Calu3 (cell line): ENCODE measurements at regions of chr16 and their contacts with region 1.

Region 1: GRCh38 chr16:12758031-12758701 is 45.5 kb downstream of the CPPED1 start:
- DNase-seq: no peak
- H3K4me3 Mint-ChIP-seq: no peak overlapping the region
- H3K27ac Mint-ChIP-seq: no peak overlapping the region
- H3K4me1 Mint-ChIP-seq: no peaks in the 10 kb centered on the region
- H3K27me3 Mint-ChIP-seq: peaks cover 36% of the 10 kb centered on the region
- CTCF ChIP-seq: no peak

Region 2: DNA sequence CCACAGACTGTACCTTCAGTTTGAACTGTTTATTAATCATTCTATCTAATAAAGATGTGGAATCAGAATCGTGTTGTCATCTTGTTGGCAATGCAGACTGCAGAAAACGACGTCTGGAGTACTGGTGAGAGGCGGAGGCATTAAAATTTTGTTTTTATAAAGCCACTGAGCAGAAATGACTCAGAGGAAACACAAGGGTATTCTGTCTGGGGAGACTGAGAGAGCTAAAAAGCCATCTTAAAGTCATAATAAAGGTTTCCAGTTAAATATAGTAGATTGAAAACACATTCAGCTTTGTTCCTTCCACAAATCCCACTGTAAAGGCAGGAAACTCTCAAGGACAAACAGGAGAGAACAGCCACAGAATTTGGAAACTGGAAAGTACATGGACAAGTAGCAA is 28.7 kb before region 1 on chr16:
- CTCF ChIA-PET with region 1: interaction called, 12 read pairs
- intact Hi-C with region 1: no loop called
- DNase-seq: no peak
- H3K4me3 Mint-ChIP-seq: no peak overlapping the region
- H3K27ac Mint-ChIP-seq: no peak overlapping the region
- H3K4me1 Mint-ChIP-seq: no peaks in the 10 kb centered on the region
- H3K27me3 Mint-ChIP-seq: peaks cover 6% of the 10 kb centered on the region
- CTCF ChIP-seq: no peak

Region 3: DNA sequence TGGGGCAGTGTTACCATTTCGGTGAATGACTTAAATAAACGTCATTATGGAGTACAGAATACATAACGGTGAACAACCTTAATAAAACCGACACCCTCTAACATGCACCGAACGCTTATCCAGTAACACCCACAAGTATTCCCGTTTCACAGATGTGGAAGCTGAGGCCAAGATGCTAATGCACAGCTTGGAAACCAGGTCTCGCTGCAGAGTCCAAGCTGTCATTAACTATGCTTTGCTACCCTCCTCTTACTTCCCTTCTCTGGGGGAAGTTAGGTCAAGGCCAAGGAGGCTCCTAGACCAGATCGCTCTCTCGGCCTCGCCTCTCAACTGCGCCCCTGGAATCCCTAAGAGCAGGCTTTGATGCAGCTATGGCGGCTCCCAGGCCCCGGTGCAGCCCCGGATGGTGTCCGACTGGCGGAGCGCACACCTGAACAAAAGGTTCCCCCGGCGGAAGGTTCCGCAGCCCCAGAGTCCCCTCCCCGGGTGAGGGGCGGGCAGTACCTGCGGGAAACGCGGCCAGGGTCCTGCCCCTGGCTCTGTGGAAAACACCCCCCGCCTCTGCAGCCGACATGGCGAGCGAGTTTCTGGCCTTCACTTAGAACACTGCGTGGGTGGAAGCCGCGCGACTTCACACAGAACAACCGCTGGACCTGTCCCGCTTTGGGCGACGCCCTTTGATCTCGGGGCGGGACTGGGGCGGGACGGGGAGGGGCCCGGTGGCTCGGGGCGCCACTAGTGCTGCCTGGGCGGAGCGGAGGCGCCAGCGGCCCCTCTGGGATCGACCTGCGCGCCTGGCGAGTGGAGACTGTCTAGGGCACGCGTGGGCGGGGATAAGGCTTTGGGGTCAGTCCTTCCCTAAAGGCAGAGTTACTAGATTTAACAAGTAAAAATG is 45.3 kb after region 1 on chr16 and contains the start of gene CPPED1:
- CTCF ChIA-PET with region 1: no interaction called
- intact Hi-C with region 1: no loop called
- DNase-seq: no peak
- H3K4me3 Mint-ChIP-seq: no peak within 1 kb of the TSS
- H3K27ac Mint-ChIP-seq: no peak within 1 kb of the TSS
- H3K4me1 Mint-ChIP-seq: peaks cover 8% of the 10 kb centered on the region
- H3K27me3 Mint-ChIP-seq: no peaks in the 10 kb centered on the region
- CTCF ChIP-seq: no peak
- total RNA-seq, gene CPPED1: not detected in 2 replicates